ENCODE measurements at regions of chr2 and their contacts with region 1.

Region 1: DNA sequence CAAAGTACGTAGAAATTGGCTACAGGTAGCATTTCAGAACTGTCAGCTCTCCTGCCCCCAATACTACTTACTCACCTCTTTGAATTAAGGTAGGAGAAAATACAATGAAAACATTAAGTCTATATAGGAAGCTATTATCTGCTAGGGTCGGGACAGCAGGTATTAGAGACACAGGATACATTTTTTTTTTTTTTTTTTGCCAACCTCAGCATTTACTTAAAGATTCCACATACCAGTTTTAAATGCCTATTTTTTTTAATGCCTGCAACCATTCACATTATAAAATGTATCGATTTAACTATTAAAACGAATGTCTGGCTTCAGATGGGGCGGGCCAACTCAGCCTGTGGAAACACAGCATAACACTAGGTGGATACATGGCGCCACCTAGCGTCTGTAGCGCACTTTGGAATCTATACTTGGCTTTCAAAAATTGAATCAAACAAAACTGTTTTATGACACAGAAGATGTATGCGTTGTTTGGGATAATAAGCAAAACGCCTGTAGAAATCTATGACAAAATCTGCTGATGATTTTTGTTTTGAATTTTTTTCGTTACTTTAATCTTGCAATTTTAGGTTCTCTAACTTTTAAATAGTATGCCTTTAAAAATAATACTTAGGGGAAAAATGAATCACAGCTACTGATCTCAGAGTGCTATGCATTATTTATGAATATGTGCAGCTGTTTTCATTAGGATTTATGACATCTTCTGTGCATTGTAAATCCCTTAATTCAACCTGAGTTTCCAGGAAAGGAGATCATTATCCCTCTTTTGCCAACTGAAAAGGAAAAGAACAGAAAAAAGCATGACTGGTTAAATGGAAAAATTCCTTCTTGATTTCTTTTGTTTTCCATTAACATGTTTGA is 261.0 kb downstream of the NYAP2 start:
- DNase-seq: peak; percentile 62 to 80 (median 65)
- H3K4me3 ChIP-seq: no peak overlapping the region
- H3K27ac ChIP-seq: no peak overlapping the region
- H3K4me1 ChIP-seq: no peaks in the 10 kb centered on the region
- H3K27me3 ChIP-seq: no peaks in the 10 kb centered on the region
- CTCF ChIP-seq: peak; percentile 84

Region 2: GRCh38 chr2:225122583-225123486 is 537.7 kb before region 1 on chr2:
- intact Hi-C with region 1: loop called (anchors 10 kb)
- DNase-seq: peak in 2 of 5 donors; percentile 6 to 25
- H3K4me3 ChIP-seq: no peak overlapping the region
- H3K27ac ChIP-seq: no peak overlapping the region
- H3K4me1 ChIP-seq: no peaks in the 10 kb centered on the region
- H3K27me3 ChIP-seq: no peaks in the 10 kb centered on the region
- CTCF ChIP-seq: peak; percentile 49

Measured in kidney (tissue), 22 donors.